ENCODE measurements at regions of chr6 and their contacts with region 1.

Region 1: DNA sequence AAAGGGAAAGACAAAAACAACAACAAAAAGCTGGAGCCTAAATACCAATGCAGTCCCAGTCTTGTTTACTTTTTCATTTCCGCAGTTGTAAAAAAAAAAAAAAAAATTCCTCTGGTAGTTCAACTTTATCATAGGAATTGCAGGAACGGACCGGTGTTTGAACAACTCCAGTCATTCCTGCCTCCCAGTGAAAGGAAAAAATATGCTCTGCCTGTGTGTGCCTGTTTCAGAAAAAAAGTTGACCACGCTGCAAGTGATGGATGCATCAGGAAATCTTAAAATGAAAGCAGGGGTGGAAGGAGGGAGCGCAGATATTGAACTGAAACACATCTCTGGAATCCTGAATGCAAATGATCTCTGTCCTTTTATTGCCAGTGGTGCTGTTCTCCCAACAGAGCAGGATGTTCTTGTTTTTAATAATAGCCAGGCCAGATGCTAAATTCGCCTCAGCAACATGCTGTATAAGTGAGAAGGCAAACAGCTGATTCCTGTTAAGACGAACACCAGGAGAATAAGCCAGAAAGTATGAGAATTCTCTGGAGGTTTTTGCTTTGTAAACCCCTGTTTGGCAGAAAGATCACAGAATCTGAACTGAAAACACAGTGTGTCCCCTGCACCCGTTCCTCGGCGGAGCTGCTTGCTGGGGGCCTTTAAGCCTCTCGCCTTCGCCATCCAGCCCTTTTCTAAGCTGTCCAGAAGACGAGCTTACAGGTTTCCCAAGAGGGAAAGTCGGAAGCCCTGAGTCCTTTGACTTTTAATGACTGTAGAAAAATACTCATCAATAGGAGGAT is 178.4 kb upstream of the SUPT3H start:
- DNase-seq: no peak
- H3K4me3 Mint-ChIP-seq: no peak overlapping the region
- H3K27ac Mint-ChIP-seq: no peak overlapping the region
- H3K4me1 Mint-ChIP-seq: peaks cover 52% of the 10 kb centered on the region
- H3K27me3 Mint-ChIP-seq: no peaks in the 10 kb centered on the region

Region 2: DNA sequence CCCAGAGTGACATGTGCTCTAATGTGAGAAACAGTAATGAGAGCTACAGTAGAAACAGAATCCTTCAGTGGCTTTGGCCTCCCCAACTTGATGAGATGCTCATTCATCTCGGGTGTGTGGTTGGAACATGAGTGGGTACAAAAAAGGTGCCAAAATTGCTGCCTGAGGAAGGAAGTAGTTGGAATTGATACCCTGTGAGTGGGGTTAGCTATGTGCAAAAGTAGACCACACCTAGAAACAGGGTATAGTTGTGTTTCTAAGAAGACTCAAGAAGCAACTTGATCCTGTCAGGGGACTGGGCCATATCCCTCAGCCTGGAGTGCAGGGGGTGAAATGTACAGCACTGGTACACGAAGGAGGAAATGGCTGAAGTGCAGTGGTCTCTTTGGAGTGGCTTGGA is 28.0 kb after region 1 on chr6:
- intact Hi-C with region 1: loop called (anchors 2 kb)
- DNase-seq: no peak
- H3K4me3 Mint-ChIP-seq: peak overlapping the region; percentile 27
- H3K27ac Mint-ChIP-seq: peak overlapping the region; percentile 84
- H3K4me1 Mint-ChIP-seq: peaks cover 52% of the 10 kb centered on the region
- H3K27me3 Mint-ChIP-seq: no peaks in the 10 kb centered on the region

Region 3: GRCh38 chr6:45590225-45590624 is 34.0 kb after region 1 on chr6:
- intact Hi-C with region 1: loop called (anchors 2 kb)
- DNase-seq: no peak
- H3K4me3 Mint-ChIP-seq: no peak overlapping the region
- H3K27ac Mint-ChIP-seq: peak overlapping the region; percentile 74
- H3K4me1 Mint-ChIP-seq: peaks cover 87% of the 10 kb centered on the region
- H3K27me3 Mint-ChIP-seq: no peaks in the 10 kb centered on the region

Region 4: DNA sequence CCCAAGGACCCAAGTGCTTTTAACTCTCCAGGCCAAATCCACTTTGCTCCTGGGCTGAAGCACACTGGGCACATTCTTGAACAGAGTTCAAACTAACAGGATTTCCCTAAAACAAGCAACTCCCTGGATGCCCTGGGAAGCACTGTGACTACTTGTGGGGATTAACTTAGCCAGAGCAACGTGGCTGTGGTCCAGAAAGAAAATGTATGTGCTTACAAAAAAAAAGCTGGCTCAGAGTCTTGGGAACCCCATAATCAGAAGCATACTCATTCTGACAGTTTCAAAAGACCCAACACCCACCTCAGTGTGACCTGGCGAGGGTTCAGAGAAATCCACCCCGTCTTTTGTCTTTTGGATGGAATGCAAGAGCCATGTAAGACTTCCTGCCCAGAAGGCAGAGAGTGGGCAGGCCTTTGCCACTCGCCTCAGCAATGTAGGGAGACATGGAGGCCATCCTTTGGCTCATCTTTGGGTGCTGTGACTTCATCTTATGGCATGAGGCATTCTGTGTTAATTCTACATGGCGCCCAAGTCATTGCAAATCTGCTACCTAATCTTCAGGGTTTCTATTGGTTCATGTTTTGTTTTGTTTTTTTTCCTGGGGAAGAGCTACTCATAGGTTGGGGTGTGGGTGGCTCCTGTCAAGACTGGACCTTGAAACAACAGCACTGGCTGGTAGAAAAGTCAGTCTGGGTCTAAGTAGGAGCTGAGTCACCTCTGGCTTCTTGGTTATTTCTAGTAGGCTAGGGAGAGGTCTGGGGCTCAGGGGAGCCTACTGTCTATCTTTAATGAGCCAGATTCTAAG is 70.1 kb after region 1 on chr6:
- intact Hi-C with region 1: loop called (anchors 2 kb)
- DNase-seq: no peak
- H3K4me3 Mint-ChIP-seq: no peak overlapping the region
- H3K27ac Mint-ChIP-seq: peak overlapping the region; percentile 41
- H3K4me1 Mint-ChIP-seq: peaks cover 36% of the 10 kb centered on the region
- H3K27me3 Mint-ChIP-seq: no peaks in the 10 kb centered on the region

Region 5: DNA sequence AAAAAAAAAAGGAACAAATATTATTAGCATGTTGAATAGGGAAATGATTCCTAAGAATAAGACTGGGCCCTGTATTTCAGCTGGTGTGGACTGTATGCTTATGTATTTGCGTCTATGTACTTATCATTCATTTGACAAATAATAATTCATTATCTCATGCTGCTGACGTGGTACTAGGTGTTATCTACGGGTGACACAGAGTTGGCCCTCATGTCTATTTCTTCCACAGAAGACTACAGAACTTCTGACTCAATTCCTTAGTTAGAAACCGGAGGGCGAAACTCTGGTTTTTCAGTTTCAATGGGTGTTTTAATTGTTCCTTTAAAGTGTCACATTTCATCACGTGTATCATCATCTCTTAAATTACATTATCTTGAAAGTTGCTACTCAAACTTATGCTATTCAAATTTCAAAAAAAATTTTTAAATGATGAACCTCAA is 153.6 kb after region 1 on chr6:
- intact Hi-C with region 1: loop called (anchors 2 kb)
- DNase-seq: peak; percentile 17
- H3K4me3 Mint-ChIP-seq: no peak overlapping the region
- H3K27ac Mint-ChIP-seq: peak overlapping the region; percentile 85
- H3K4me1 Mint-ChIP-seq: peaks cover 22% of the 10 kb centered on the region
- H3K27me3 Mint-ChIP-seq: no peaks in the 10 kb centered on the region